Caco-2 (cell line): ENCODE measurements at regions of chr2 and their contacts with region 1.

Region 1: GRCh38 chr2:223797811-223798721 is 39.3 kb downstream of the AP1S3 start:
- DNase-seq: peak in 1 of 2 experiments; percentile 50
- H3K4me3 ChIP-seq: no peak overlapping the region
- H3K4me3 Mint-ChIP-seq: peak overlapping the region; percentile 12
- H3K27ac Mint-ChIP-seq: peak overlapping the region; percentile 75
- H3K4me1 ChIP-seq: peaks cover 90% of the 10 kb centered on the region
- H3K4me1 Mint-ChIP-seq: peaks cover 55% of the 10 kb centered on the region
- H3K27me3 ChIP-seq: no peaks in the 10 kb centered on the region
- H3K27me3 Mint-ChIP-seq: no peaks in the 10 kb centered on the region
- CTCF ChIP-seq: peak; percentile 56 to 72

Region 2: DNA sequence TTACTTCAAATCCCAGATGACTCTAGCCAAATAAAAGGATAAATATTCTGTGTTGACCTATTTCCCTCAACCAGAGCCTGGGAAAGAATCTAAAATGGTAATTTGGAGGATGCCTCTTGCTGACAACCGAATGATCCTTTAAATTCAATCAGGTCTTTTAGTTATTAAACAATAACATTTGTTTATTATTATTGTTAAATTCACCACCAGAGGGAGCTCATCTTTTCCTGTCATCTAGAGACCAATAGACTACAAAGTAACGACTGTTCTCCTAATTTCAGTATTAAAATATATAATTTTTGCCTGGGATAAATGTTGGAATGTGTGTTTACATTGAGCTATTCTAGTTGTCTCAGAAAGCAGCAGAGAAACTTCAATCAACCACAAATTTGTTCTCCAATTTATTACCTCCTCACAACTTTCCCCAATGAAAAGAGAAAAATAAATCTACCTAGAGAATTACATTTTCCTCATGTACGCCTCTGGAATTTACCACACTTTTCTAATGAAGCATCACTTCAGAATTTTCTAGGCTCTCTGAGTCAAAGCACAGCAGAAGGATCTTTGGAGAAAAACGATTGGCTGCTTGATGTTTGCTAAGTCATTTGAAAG is 338.6 kb before region 1 on chr2:
- CTCF ChIA-PET with region 1: no interaction called
- POLR2A ChIA-PET with region 1: no interaction called
- intact Hi-C with region 1: loop called (anchors 5 kb)
- DNase-seq: no peak
- H3K4me3 ChIP-seq: no peak overlapping the region
- H3K4me3 Mint-ChIP-seq: no peak overlapping the region
- H3K27ac Mint-ChIP-seq: no peak overlapping the region
- H3K4me1 ChIP-seq: no peaks in the 10 kb centered on the region
- H3K4me1 Mint-ChIP-seq: no peaks in the 10 kb centered on the region
- H3K27me3 ChIP-seq: no peaks in the 10 kb centered on the region
- H3K27me3 Mint-ChIP-seq: no peaks in the 10 kb centered on the region
- CTCF ChIP-seq: peak; percentile 26 to 66

Region 3: DNA sequence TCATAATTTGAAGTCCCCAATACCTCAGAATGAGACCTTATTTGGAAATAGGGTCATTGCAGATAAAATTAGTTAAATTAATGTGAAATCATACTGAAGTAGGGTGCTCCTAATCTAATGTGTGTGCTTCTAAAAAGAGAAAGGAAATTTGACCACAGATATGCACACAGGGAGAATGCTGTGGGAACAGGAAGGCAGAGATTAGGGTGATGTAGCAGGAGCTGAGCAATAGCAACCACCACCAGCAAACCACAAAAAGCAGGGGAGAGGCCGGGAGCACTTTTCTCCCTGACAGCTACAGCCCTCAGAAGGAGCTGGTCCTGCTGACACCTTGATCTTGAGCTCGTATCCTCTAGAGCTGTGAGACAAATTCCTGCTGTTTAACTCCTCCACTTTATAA is 171.3 kb before region 1 on chr2:
- CTCF ChIA-PET with region 1: no interaction called
- POLR2A ChIA-PET with region 1: no interaction called
- intact Hi-C with region 1: no loop called
- DNase-seq: no peak
- H3K4me3 ChIP-seq: no peak overlapping the region
- H3K4me3 Mint-ChIP-seq: no peak overlapping the region
- H3K27ac Mint-ChIP-seq: no peak overlapping the region
- H3K4me1 ChIP-seq: no peaks in the 10 kb centered on the region
- H3K4me1 Mint-ChIP-seq: no peaks in the 10 kb centered on the region
- H3K27me3 ChIP-seq: no peaks in the 10 kb centered on the region
- H3K27me3 Mint-ChIP-seq: peaks cover 23% of the 10 kb centered on the region
- CTCF ChIP-seq: no peak

Region 4: GRCh38 chr2:223692191-223692947 is 105.7 kb before region 1 on chr2:
- CTCF ChIA-PET with region 1: interaction called, 9 read pairs
- POLR2A ChIA-PET with region 1: no interaction called
- intact Hi-C with region 1: loop called (anchors 1 kb)
- DNase-seq: peak; percentile 71 to 76
- H3K4me3 ChIP-seq: no peak overlapping the region
- H3K4me3 Mint-ChIP-seq: no peak overlapping the region
- H3K27ac Mint-ChIP-seq: no peak overlapping the region
- H3K4me1 ChIP-seq: no peaks in the 10 kb centered on the region
- H3K4me1 Mint-ChIP-seq: no peaks in the 10 kb centered on the region
- H3K27me3 ChIP-seq: no peaks in the 10 kb centered on the region
- H3K27me3 Mint-ChIP-seq: no peaks in the 10 kb centered on the region
- CTCF ChIP-seq: peak; percentile 75 to 96

Region 5: DNA sequence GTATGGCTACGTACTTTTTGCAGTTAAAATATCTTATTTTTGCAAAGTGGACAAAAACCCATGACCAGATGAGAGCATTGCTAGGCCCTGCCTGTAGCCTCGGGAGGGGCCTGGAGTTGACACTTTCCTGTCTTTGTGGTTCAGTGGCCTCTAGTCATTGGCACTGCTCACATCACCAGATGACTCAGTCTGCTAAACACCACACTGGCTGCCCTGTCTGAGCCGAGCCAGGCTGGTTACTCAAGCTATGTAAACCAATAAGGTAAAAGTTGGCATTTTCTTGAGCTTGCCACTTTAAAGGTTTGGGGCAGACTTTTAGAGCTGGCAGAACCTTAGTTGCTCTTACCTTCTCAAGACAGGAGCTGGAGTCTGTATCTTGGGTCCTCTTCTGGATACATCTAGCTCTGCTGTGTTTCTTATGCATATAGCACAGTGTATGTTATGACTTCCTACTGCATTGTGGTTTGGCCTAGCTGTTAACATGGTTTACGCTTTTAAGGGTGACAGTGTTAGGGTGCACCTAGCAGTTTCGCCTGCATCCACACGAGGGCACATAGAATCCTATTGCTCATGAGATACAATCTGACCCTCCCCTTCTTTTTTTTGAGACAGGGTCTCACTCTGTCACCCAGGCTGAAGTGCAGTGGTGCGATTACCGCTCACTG is 37.1 kb before region 1 on chr2:
- CTCF ChIA-PET with region 1: interaction called, 15 read pairs
- POLR2A ChIA-PET with region 1: no interaction called
- intact Hi-C with region 1: loop called (anchors 1 kb)
- DNase-seq: no peak
- H3K4me3 ChIP-seq: no peak overlapping the region
- H3K4me3 Mint-ChIP-seq: no peak overlapping the region
- H3K27ac Mint-ChIP-seq: peak overlapping the region; percentile 94
- H3K4me1 ChIP-seq: peaks cover 42% of the 10 kb centered on the region
- H3K4me1 Mint-ChIP-seq: peaks cover 48% of the 10 kb centered on the region
- H3K27me3 ChIP-seq: no peaks in the 10 kb centered on the region
- H3K27me3 Mint-ChIP-seq: no peaks in the 10 kb centered on the region
- CTCF ChIP-seq: no peak

Region 6: GRCh38 chr2:223853425-223853837 is 55.4 kb after region 1 on chr2:
- CTCF ChIA-PET with region 1: no interaction called
- POLR2A ChIA-PET with region 1: no interaction called
- intact Hi-C with region 1: loop called (anchors 1 kb)
- DNase-seq: no peak
- H3K4me3 ChIP-seq: no peak overlapping the region
- H3K4me3 Mint-ChIP-seq: peak overlapping the region; percentile 36
- H3K27ac Mint-ChIP-seq: peak overlapping the region; percentile 84
- H3K4me1 ChIP-seq: peaks cover 80% of the 10 kb centered on the region
- H3K4me1 Mint-ChIP-seq: peaks cover 70% of the 10 kb centered on the region
- H3K27me3 ChIP-seq: no peaks in the 10 kb centered on the region
- H3K27me3 Mint-ChIP-seq: no peaks in the 10 kb centered on the region
- CTCF ChIP-seq: no peak